Activated CD4-positive, alpha-beta memory T cell treated with anti-CD3 and anti-CD28 coated beads, Interleukin-2, amount 10 ng/mL, durations not matched to agents 7 days and 5 days (primary cell): ENCODE measurements at regions of chr5 and their contacts with region 1.

Region 1: DNA sequence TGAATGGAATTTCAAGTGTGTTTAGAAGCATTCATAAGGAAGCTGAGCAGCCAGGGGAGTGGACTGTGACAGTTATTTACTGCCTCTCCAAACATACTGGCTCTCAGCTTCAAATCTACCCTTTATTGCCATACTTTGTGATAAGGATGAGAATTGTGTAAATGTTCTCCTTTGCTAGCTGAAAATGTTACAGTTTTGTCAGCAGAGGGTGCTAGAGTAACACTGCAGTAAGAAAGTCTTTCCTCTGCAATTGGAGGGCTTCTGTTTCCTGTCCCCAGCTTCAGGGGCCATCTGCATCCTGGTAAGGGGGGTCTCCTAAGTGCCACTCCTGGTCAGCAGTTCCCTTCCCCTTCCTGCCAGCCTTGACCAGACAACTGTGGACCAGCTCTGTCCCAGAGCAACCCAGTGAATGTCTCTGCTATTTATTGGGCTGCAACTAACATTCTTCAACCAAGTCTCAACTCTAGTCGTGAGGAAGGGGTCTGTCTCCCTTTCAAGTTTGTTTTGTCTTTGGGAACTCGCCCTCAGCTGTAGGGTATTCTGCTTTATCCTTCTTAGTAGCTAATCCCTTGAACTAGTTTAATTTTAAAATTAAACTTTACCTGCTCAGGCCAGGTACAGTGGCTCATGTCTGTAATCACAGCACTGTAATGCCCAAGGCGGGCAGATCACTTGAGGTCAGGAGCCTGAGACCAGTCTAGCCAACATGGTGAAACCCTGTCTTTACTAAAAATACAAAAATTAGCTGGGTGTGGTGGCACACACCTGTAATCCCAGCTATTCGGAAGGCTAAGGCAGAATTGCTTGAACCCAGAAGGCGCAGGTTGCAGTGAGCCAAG is 45.3 kb downstream of the RAPGEF6 start:
- DNase-seq: peak; percentile 23
- H3K4me3 Mint-ChIP-seq: no peak overlapping the region
- H3K27ac Mint-ChIP-seq: no peak overlapping the region
- H3K4me1 Mint-ChIP-seq: peaks cover 29% of the 10 kb centered on the region
- H3K27me3 Mint-ChIP-seq: no peaks in the 10 kb centered on the region

Region 2: GRCh38 chr5:131148835-131149234 is 440.9 kb before region 1 on chr5:
- CTCF ChIA-PET with region 1: no interaction called
- POLR2A ChIA-PET with region 1: no interaction called
- DNase-seq: no peak
- H3K4me3 Mint-ChIP-seq: no peak overlapping the region
- H3K27ac Mint-ChIP-seq: no peak overlapping the region
- H3K4me1 Mint-ChIP-seq: no peaks in the 10 kb centered on the region
- H3K27me3 Mint-ChIP-seq: no peaks in the 10 kb centered on the region

Region 3: GRCh38 chr5:131198625-131199024 is 391.1 kb before region 1 on chr5:
- CTCF ChIA-PET with region 1: no interaction called
- POLR2A ChIA-PET with region 1: no interaction called
- DNase-seq: no peak
- H3K4me3 Mint-ChIP-seq: no peak overlapping the region
- H3K27ac Mint-ChIP-seq: no peak overlapping the region
- H3K4me1 Mint-ChIP-seq: no peaks in the 10 kb centered on the region
- H3K27me3 Mint-ChIP-seq: no peaks in the 10 kb centered on the region

Region 4: DNA sequence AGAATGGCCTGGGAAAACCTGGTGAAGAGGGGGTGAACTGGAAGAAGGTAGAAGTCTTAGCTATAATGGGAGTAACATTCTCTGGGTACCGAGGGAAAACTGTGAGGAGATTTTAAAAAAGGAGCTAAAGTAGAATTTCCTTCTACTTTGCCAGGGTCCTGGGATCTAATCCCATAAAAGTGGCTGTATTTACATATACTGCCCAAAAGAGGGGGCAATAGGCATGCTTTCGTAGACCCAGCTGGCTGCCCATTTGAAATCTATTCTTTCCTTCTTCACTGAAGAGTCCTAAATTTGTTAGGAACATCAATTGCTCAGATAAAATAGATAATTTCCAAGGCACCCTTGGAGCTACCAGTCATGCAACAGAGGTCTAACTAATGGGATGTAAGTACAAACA is 166.7 kb before region 1 on chr5:
- CTCF ChIA-PET with region 1: interaction called, 15 read pairs
- POLR2A ChIA-PET with region 1: no interaction called
- DNase-seq: no peak
- H3K4me3 Mint-ChIP-seq: no peak overlapping the region
- H3K27ac Mint-ChIP-seq: no peak overlapping the region
- H3K4me1 Mint-ChIP-seq: peaks cover 14% of the 10 kb centered on the region
- H3K27me3 Mint-ChIP-seq: no peaks in the 10 kb centered on the region

Region 5: DNA sequence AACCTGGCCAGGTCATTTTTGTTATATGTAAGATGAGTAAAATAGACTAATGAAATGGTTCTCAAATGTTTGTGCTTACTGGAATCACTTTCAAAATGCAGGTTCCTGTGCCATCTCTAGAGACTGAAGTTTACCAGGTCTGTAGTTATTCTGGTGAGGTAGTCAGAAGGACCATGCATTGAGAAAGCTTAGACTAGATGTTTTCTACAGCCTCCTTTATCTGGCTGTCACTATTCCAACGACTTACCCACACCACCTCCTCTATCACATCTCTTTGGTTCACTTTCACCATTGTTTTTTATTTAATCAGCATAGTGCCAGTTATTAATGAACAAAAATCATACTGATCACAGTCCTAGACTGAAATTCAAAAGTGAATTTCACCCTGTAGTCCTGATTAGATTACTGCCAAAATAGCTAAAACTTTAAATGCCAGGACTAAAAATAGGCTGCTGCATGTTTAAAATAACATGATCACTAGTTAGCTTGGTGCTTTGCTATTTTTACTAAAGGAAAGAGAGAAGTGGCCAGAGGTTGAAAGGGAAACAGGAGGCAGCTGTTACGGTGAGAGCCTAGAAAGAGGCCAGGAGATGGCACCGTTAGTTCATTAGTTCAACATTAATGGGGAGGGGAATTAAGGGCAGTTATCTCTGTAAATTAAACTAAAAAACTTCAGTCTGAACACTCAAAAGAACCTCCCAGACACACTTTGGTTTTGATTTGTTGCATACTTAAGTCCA is 221.0 kb after region 1 on chr5:
- CTCF ChIA-PET with region 1: interaction called, 17 read pairs
- POLR2A ChIA-PET with region 1: no interaction called
- DNase-seq: no peak
- H3K4me3 Mint-ChIP-seq: no peak overlapping the region
- H3K27ac Mint-ChIP-seq: no peak overlapping the region
- H3K4me1 Mint-ChIP-seq: no peaks in the 10 kb centered on the region
- H3K27me3 Mint-ChIP-seq: peaks cover 2% of the 10 kb centered on the region

Region 6: GRCh38 chr5:132001647-132002561 is 412.2 kb after region 1 on chr5:
- CTCF ChIA-PET with region 1: interaction called, 163 read pairs
- POLR2A ChIA-PET with region 1: no interaction called
- DNase-seq: no peak
- H3K4me3 Mint-ChIP-seq: no peak overlapping the region
- H3K27ac Mint-ChIP-seq: no peak overlapping the region
- H3K4me1 Mint-ChIP-seq: peaks cover 42% of the 10 kb centered on the region
- H3K27me3 Mint-ChIP-seq: peaks cover 5% of the 10 kb centered on the region

Region 7: GRCh38 chr5:132064738-132065331 is 475.1 kb after region 1 on chr5:
- CTCF ChIA-PET with region 1: interaction called, 79 read pairs
- POLR2A ChIA-PET with region 1: no interaction called
- DNase-seq: peak; percentile 85
- H3K4me3 Mint-ChIP-seq: no peak overlapping the region
- H3K27ac Mint-ChIP-seq: no peak overlapping the region
- H3K4me1 Mint-ChIP-seq: peaks cover 35% of the 10 kb centered on the region
- H3K27me3 Mint-ChIP-seq: no peaks in the 10 kb centered on the region